ENCODE measurements at regions of chr11 and their contacts with region 1.

Region 1: DNA sequence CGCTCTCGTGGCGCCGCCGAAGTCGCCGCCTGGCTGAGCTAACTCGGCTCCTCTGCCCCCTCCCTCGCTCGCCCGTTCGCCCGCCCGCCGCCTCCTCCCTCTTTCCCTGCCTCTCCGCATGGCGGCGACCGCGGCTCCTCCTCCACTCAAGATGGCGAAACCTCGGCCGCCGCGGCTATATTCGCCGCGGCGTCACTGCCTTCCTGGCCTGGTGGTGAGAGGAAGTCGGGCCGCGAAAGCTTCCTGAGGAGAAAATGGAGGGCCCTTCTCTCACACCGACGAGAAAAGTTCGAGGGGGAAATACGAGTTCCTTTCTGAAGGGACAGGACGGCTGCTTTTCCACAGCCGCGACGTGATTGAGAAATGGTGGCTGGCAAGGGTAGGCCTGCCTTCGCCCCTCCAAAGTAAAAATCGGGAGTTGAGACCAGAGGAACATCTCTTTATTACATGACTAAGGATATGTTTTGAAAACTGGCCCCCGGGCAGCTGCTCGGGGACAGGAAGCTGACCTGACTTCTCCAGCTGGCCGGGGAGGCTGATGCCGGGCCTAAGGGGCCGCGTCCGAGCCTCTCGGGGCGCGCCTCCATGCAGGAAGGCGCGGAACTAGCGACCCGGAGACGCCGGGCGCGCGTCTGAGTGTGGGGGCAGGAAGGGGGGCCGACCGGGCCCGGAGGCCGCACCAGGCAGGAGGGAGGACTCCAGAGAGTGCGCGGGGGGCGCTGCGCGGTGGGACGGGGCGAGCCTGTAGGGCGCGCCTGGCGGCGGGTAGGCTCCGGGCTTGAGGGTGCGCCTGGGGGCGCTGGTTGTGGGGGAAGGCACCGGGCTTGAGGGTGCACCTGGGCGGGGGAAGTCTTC is at the start of gene DDX6:
- DNase-seq: peak; percentile 25 to 90
- H3K4me3 ChIP-seq: peak within 1 kb of the TSS; percentile 88 to 100 (median 93)
- H3K27ac ChIP-seq: peak within 1 kb of the TSS; percentile 99
- H3K4me1 ChIP-seq: peaks cover 0 to 3% (median 2%) of the 10 kb centered on the region in 4 experiments; a peak in 3 of 7 replicates
- H3K27me3 ChIP-seq: no peaks in the 10 kb centered on the region
- CTCF ChIP-seq: peak; percentile 28 to 48 (median 40)
- EP300 ChIP-seq: no peak
- POLR2A ChIP-seq: peak; percentile 71 to 94; a peak in 2 of 3 replicates
- RAD21 ChIP-seq: peak; percentile 8 to 28; a peak in 2 of 4 replicates
- total RNA-seq, gene DDX6: 174 and 181 TPM in 2 replicates

Region 2: GRCh38 chr11:118383657-118384056 is 407.7 kb before region 1 on chr11:
- CTCF ChIA-PET with region 1: no interaction called
- POLR2A ChIA-PET with region 1: no interaction called
- DNase-seq: no peak
- H3K4me3 ChIP-seq: no peak overlapping the region
- H3K27ac ChIP-seq: no peak overlapping the region
- H3K4me1 ChIP-seq: no peaks in the 10 kb centered on the region
- H3K27me3 ChIP-seq: no peaks in the 10 kb centered on the region
- CTCF ChIP-seq: no peak
- EP300 ChIP-seq: no peak
- POLR2A ChIP-seq: no peak
- RAD21 ChIP-seq: no peak

Region 3: DNA sequence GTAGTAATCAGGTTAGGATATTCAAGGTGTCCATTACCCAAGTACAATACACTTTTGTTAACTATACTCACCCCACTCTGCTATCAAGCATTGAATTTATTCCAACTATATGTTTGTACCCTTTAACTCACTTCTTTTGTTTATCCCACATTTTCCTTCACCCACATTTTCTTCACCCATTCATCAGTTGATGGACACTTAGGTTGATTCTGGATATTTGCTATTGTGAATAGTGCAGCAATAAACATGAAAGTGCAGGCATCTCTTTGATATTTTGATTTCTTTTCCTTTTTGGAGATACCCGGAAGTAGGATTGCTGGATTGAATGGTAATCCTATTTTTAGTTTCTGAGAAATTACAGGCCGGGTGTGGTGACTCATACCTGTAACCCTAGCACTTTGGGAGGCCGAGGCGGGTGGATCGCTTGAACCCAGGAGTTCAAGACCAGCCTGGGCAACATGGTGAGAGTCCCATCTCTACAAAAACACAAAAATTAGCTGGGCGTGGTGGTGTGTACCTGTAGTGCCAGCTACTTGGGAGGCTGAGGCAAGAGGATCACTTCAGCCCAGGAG is 253.8 kb before region 1 on chr11:
- CTCF ChIA-PET with region 1: no interaction called
- POLR2A ChIA-PET with region 1: no interaction called
- DNase-seq: no peak
- H3K4me3 ChIP-seq: no peak overlapping the region
- H3K27ac ChIP-seq: no peak overlapping the region
- H3K4me1 ChIP-seq: no peaks in the 10 kb centered on the region
- H3K27me3 ChIP-seq: no peaks in the 10 kb centered on the region
- CTCF ChIP-seq: no peak
- EP300 ChIP-seq: no peak
- POLR2A ChIP-seq: no peak
- RAD21 ChIP-seq: no peak

Region 4: GRCh38 chr11:118715245-118715831 is 76.0 kb before region 1 on chr11:
- CTCF ChIA-PET with region 1: interaction called, 4 read pairs
- POLR2A ChIA-PET with region 1: interaction called, 35 read pairs
- DNase-seq: peak in 1 of 2 experiments; percentile 51
- H3K4me3 ChIP-seq: peak overlapping the region in 1 of 4 experiments; percentile 27; a peak in 1 of 8 replicates
- H3K27ac ChIP-seq: peak overlapping the region; percentile 95
- H3K4me1 ChIP-seq: peaks cover 4 to 15% (median 8%) of the 10 kb centered on the region in 4 experiments
- H3K27me3 ChIP-seq: no peaks in the 10 kb centered on the region
- CTCF ChIP-seq: no peak
- EP300 ChIP-seq: no peak
- POLR2A ChIP-seq: peak in 1 of 2 experiments; percentile 41; a peak in 1 of 3 replicates
- RAD21 ChIP-seq: no peak

Region 5: GRCh38 chr11:118804094-118804493 is 12.8 kb after region 1 on chr11:
- CTCF ChIA-PET with region 1: interaction called, 6 read pairs
- POLR2A ChIA-PET with region 1: interaction called, 13 read pairs
- DNase-seq: no peak
- H3K4me3 ChIP-seq: no peak overlapping the region
- H3K27ac ChIP-seq: no peak overlapping the region
- H3K4me1 ChIP-seq: no peaks in the 10 kb centered on the region
- H3K27me3 ChIP-seq: no peaks in the 10 kb centered on the region
- CTCF ChIP-seq: no peak
- EP300 ChIP-seq: no peak
- POLR2A ChIP-seq: no peak
- RAD21 ChIP-seq: no peak

Region 6: GRCh38 chr11:118870396-118871345 is 79.3 kb after region 1 on chr11:
- CTCF ChIA-PET with region 1: interaction called, 3 read pairs
- POLR2A ChIA-PET with region 1: interaction called, 20 read pairs
- DNase-seq: peak in 1 of 2 experiments; percentile 63
- H3K4me3 ChIP-seq: peak overlapping the region in 2 of 4 experiments; percentile 7 to 32; a peak in 4 of 8 replicates
- H3K27ac ChIP-seq: no peak overlapping the region
- H3K4me1 ChIP-seq: peaks cover 0 to 12% (median 6%) of the 10 kb centered on the region in 4 experiments; a peak in 6 of 7 replicates
- H3K27me3 ChIP-seq: no peaks in the 10 kb centered on the region
- CTCF ChIP-seq: no peak
- EP300 ChIP-seq: no peak
- POLR2A ChIP-seq: no peak
- RAD21 ChIP-seq: peak; percentile 6 to 26; a peak in 1 of 4 replicates

Region 7: DNA sequence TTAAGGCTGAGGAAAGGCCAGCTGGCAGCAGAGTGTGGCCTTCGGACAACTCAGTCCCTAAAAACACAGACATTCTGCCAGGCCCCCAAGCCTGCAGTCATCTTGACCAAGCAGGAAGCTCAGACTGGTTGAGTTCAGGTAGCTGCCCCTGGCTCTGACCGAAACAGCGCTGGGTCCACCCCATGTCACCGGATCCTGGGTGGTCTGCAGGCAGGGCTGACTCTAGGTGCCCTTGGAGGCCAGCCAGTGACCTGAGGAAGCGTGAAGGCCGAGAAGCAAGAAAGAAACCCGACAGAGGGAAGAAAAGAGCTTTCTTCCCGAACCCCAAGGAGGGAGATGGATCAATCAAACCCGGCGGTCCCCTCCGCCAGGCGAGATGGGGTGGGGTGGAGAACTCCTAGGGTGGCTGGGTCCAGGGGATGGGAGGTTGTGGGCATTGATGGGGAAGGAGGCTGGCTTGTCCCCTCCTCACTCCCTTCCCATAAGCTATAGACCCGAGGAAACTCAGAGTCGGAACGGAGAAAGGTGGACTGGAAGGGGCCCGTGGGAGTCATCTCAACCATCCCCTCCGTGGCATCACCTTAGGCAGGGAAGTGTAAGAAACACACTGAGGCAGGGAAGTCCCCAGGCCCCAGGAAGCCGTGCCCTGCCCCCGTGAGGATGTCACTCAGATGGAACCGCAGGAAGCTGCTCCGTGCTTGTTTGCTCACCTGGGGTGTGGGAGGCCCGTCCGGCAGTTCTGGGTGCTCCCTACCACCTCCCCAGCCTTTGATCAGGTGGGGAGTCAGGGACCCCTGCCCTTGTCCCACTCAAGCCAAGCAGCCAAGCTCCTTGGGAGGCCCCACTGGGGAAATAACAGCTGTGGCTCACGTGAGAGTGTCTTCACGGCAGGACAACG is 104.1 kb after region 1 on chr11:
- CTCF ChIA-PET with region 1: interaction called, 16 read pairs
- POLR2A ChIA-PET with region 1: interaction called, 38 read pairs
- DNase-seq: no peak
- H3K4me3 ChIP-seq: no peak overlapping the region
- H3K27ac ChIP-seq: no peak overlapping the region; the same call in 1 of the 2 replicates
- H3K4me1 ChIP-seq: peaks cover 3 to 44% (median 26%) of the 10 kb centered on the region in 4 experiments
- H3K27me3 ChIP-seq: peaks cover 0 to 3% (median 0%) of the 10 kb centered on the region in 4 experiments; a peak in 1 of 7 replicates
- CTCF ChIP-seq: no peak
- EP300 ChIP-seq: no peak
- POLR2A ChIP-seq: no peak; a peak in 2 of 3 replicates
- RAD21 ChIP-seq: no peak

Region 8: GRCh38 chr11:118928108-118928870 is 137.0 kb after region 1 on chr11:
- CTCF ChIA-PET with region 1: interaction called, 12 read pairs
- POLR2A ChIA-PET with region 1: interaction called, 10 read pairs
- DNase-seq: peak in 1 of 2 experiments; percentile 99
- H3K4me3 ChIP-seq: peak overlapping the region; percentile 86 to 95 (median 88)
- H3K27ac ChIP-seq: no peak overlapping the region
- H3K4me1 ChIP-seq: peaks cover 7 to 31% (median 20%) of the 10 kb centered on the region in 4 experiments
- H3K27me3 ChIP-seq: peaks cover 0 to 6% (median 0%) of the 10 kb centered on the region in 4 experiments; a peak in 3 of 7 replicates
- CTCF ChIP-seq: peak; percentile 80 to 92 (median 88)
- EP300 ChIP-seq: no peak
- POLR2A ChIP-seq: no peak
- RAD21 ChIP-seq: peak; percentile 64 to 76

Region 9: GRCh38 chr11:119236490-119236889 is 445.2 kb after region 1 on chr11:
- CTCF ChIA-PET with region 1: no interaction called
- POLR2A ChIA-PET with region 1: no interaction called
- DNase-seq: no peak
- H3K4me3 ChIP-seq: no peak overlapping the region
- H3K27ac ChIP-seq: no peak overlapping the region
- H3K4me1 ChIP-seq: no peaks in the 10 kb centered on the region
- H3K27me3 ChIP-seq: no peaks in the 10 kb centered on the region
- CTCF ChIP-seq: no peak
- EP300 ChIP-seq: no peak
- POLR2A ChIP-seq: no peak
- RAD21 ChIP-seq: no peak

Region 10: DNA sequence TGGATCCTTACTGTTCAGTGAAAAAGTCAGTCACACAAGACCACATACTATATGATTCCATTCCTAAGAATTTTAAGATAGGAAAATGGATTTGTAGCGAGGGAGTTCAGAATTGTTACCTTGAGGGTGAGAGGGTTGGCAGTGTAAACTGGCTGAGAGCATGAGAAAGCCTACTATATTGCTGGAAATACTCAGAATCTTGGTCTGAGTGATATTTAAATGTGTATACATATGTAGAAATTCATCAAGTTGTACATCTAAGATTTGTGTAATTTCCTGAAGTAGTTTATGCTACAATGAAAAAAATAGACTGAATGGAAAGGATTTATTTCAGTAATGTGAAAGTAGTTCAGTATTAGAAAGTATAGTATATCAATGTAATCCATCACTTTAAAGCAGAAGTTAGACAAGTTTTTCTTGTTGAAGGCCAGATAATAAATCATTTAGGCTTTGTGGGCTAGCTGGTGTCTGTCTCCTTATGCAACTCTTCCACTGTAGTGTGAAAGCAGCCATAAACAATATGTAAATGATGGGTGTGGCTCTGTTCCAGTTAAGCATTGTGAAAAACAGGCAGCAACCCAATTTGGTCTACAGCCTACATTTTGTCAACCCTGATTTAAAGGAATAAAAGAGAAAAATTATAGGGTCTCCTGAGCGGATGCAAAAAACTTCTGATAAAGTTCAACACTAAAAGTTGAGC is 758.9 kb after region 1 on chr11:
- CTCF ChIA-PET with region 1: no interaction called
- POLR2A ChIA-PET with region 1: no interaction called
- DNase-seq: no peak
- H3K4me3 ChIP-seq: no peak overlapping the region
- H3K27ac ChIP-seq: no peak overlapping the region
- H3K4me1 ChIP-seq: no peaks in the 10 kb centered on the region; a peak in 1 of 7 replicates
- H3K27me3 ChIP-seq: no peaks in the 10 kb centered on the region; a peak in 1 of 7 replicates
- CTCF ChIP-seq: no peak
- EP300 ChIP-seq: no peak
- POLR2A ChIP-seq: no peak
- RAD21 ChIP-seq: no peak